ENCODE measurements at regions of chr3 and their contacts with region 1.

Region 1: DNA sequence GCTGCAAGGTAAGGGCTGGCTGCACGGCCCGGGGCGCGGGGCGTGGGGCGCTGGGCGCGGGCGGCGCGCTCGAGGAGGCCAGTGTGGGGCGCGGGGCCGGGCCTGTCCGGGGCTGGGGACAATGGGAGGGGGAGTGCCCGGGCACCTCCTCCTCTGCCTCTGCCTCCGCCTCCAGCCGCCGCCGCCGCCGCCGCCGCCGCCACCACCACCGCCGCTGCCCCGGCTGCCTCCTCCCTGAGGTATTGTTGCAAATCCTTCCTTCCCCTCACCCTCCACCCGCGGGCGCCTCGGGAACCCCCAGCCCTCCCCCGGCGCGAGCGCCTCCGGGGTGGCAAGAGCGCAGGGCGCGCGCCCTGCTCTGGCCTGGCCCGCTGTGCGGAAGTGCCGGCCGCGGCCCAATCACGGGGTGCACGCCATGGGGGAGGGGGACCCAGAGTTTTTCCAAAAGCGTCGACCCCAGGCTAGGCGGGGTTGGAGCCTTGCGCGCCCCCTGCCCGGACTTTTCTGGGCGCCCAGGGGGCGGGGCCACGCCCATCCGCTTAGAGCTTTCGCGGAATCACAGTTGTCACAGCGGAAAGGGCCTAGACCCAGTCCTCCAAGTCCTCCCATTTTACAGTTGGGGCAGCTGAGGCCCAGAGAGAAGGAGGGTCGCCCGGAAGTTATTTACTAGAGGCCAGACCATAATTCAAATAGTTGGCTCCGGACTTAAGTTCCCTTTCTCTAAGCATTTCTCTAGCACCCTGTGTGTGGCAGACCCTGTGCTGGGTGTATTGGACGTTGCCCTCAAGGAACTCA is at the start of gene LPP:
- DNase-seq: peak; percentile 76 to 82
- ATAC-seq: peak; percentile 72 to 93 (median 82)
- H3K4me3 ChIP-seq: peak within 1 kb of the TSS; percentile 66 to 92 (median 80)
- H3K27ac ChIP-seq: peak within 1 kb of the TSS; percentile 90 to 99 (median 96)
- H3K4me1 ChIP-seq: peaks cover 0 to 67% (median 54%) of the 10 kb centered on the region in 9 donors
- H3K27me3 ChIP-seq: no peaks in the 10 kb centered on the region
- CTCF ChIP-seq: peak in 2 of 9 donors; percentile 23 to 26
- total RNA-seq, gene LPP: 116 to 188 (median 148) TPM

Region 2: GRCh38 chr3:188037216-188037718 is 116.9 kb before region 1 on chr3:
- intact Hi-C with region 1: loop called in 2 of 10 experiments (anchors 5 to 10 kb)
- DNase-seq: peak in 1 of 2 donors; percentile 28
- ATAC-seq: peak; percentile 66 to 92 (median 86)
- H3K4me3 ChIP-seq: peak overlapping the region in 4 of 10 donors; percentile 3 to 24 (median 16)
- H3K27ac ChIP-seq: peak overlapping the region in 8 of 10 donors; percentile 26 to 70 (median 54)
- H3K4me1 ChIP-seq: peaks cover 0 to 19% (median 13%) of the 10 kb centered on the region in 9 donors
- H3K27me3 ChIP-seq: no peaks in the 10 kb centered on the region
- CTCF ChIP-seq: peak; percentile 18 to 67 (median 50)

Region 3: DNA sequence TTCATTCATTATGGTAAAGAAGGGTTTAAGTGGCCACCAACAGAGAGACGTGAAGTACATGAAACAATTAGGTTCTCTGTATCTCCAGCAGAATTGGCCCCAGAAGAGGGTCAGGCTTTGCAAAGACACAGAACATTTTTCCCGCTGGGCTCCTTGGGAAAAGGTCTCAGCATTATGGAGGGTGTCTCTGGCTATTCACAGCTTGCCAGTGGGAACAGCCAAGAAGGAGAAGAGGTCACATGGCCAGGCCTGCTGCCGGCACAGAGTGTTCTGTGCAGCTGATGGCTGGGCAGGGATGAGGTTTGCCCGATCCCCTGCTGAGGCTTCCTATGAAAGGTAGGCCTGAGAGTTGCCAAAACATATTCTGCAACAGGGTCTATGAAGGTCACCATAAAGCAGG is 78.0 kb before region 1 on chr3:
- intact Hi-C with region 1: loop called in 1 of 10 experiments (anchors 5 kb)
- DNase-seq: peak in 1 of 2 donors; percentile 26
- ATAC-seq: peak in 7 of 8 donors; percentile 26 to 80 (median 69)
- H3K4me3 ChIP-seq: no peak overlapping the region
- H3K27ac ChIP-seq: peak overlapping the region in 8 of 10 donors; percentile 3 to 65 (median 45)
- H3K4me1 ChIP-seq: peaks cover 0 to 13% (median 8%) of the 10 kb centered on the region in 9 donors
- H3K27me3 ChIP-seq: no peaks in the 10 kb centered on the region
- CTCF ChIP-seq: no peak

Region 4: GRCh38 chr3:188270423-188270972 is 116.3 kb after region 1 on chr3:
- intact Hi-C with region 1: loop called in 4 of 10 experiments (anchors 5 to 10 kb)
- DNase-seq: no peak
- ATAC-seq: peak in 5 of 8 donors; percentile 23 to 54 (median 46)
- H3K4me3 ChIP-seq: peak overlapping the region in 1 of 10 donors; percentile 1
- H3K27ac ChIP-seq: peak overlapping the region; percentile 45 to 93 (median 74)
- H3K4me1 ChIP-seq: peaks cover 14 to 92% (median 71%) of the 10 kb centered on the region in 9 donors
- H3K27me3 ChIP-seq: no peaks in the 10 kb centered on the region
- CTCF ChIP-seq: no peak

Region 5: DNA sequence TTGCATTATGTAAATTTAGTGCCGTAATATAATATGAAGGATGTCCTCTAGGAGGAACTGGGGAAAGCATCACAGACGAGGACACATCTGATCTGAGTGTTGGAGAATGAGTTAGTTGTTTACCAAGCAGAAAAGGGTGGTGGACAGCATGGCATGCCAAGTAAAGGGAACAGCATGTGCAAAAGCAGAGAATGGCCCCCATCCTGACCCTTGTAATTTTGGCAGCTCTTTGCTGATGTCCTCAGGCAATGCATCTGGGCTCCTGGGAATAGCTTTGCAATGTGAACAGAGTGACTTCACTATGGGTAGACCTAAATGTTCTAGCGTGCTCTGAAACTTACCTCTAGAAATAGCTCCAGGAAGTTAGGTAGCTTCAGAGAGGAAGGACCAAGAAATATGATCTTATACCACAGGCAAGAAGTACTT is 263.1 kb after region 1 on chr3:
- intact Hi-C with region 1: no loop called
- DNase-seq: no peak
- ATAC-seq: peak in 4 of 8 donors; percentile 39 to 79 (median 48)
- H3K4me3 ChIP-seq: no peak overlapping the region
- H3K27ac ChIP-seq: no peak overlapping the region
- H3K4me1 ChIP-seq: peaks cover 0 to 28% (median 18%) of the 10 kb centered on the region in 9 donors
- H3K27me3 ChIP-seq: no peaks in the 10 kb centered on the region
- CTCF ChIP-seq: no peak

Region 6: GRCh38 chr3:189148081-189148507 is 993.9 kb after region 1 on chr3:
- intact Hi-C with region 1: loop called in 1 of 10 experiments (anchors 5 kb)
- DNase-seq: peak; percentile 23 to 68
- ATAC-seq: peak; percentile 56 to 79 (median 70)
- H3K4me3 ChIP-seq: no peak overlapping the region
- H3K27ac ChIP-seq: peak overlapping the region in 2 of 10 donors; percentile 11 to 46
- H3K4me1 ChIP-seq: peaks cover 0 to 32% (median 7%) of the 10 kb centered on the region in 9 donors
- H3K27me3 ChIP-seq: no peaks in the 10 kb centered on the region
- CTCF ChIP-seq: peak; percentile 68 to 85 (median 78)

Measured in heart right ventricle (tissue), 16 donors.